T-cell (primary cell): ENCODE measurements at regions of chr12 and their contacts with region 1.

Region 1: DNA sequence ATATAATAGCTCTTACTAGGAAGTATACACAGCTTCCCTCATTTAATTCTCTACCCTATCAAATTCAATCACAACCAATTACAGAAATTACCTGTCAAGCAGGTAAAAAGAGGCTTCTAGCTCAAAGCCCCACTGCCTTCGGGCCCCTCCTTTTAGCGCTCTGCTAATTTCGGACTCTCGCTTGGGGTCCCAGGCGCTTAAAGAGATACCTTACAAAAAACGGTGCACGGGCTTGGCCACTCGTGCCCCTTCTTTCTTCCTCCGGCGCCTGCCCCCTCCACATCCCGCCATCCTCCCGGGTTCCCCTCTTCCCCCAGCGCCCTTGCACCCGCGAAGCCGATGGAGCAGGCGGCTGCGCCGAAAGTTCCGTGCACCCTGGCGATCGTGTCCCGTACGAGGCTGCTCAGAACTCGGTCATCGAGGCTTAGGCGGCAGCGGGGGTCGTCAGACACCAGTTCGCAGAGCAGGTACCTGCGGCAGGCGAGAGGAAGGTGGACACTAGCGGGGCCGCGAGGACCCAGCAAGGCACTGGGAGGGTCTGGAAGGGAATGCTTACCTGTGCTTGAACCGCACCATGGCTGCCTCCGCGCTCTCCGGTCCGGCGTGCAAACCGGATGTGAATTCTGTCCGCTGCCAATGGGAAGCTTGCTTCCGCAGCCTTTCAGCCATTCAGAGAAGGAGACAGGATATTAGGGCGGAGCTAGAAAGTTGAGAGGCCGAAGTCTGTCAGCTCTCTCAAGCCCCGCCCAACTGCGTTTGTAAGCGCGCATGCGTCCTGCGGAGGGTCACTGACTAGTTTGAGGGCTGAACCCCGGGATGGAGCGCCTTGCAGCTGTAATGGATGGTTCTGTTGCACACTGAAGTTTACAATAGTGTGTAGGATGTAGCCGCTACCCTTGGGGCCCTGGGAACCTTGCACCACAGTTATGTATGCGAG is at the start of gene POP5:
- DNase-seq: peak; percentile 76 to 96 (median 86)
- ATAC-seq: peak; percentile 92 to 95 (median 94)
- H3K4me3 ChIP-seq: peak within 1 kb of the TSS; percentile 88 to 95
- H3K4me3 Mint-ChIP-seq: peak within 1 kb of the TSS; percentile 97 to 98 (median 97)
- H3K27ac ChIP-seq: peak within 1 kb of the TSS; percentile 57
- H3K27ac Mint-ChIP-seq: peak within 1 kb of the TSS; percentile 91 to 93
- H3K4me1 ChIP-seq: peaks cover 4 to 32% of the 10 kb centered on the region in 2 experiments
- H3K4me1 Mint-ChIP-seq: peaks cover 38 to 40% (median 39%) of the 10 kb centered on the region in 3 donors
- H3K27me3 ChIP-seq: peaks cover 2 to 24% of the 10 kb centered on the region in 2 experiments
- H3K27me3 Mint-ChIP-seq: peaks cover 0 to 7% of the 10 kb centered on the region in 2 donors
- total RNA-seq, gene POP5: 40.6 to 69.0 (median 63.1) TPM

Region 2: DNA sequence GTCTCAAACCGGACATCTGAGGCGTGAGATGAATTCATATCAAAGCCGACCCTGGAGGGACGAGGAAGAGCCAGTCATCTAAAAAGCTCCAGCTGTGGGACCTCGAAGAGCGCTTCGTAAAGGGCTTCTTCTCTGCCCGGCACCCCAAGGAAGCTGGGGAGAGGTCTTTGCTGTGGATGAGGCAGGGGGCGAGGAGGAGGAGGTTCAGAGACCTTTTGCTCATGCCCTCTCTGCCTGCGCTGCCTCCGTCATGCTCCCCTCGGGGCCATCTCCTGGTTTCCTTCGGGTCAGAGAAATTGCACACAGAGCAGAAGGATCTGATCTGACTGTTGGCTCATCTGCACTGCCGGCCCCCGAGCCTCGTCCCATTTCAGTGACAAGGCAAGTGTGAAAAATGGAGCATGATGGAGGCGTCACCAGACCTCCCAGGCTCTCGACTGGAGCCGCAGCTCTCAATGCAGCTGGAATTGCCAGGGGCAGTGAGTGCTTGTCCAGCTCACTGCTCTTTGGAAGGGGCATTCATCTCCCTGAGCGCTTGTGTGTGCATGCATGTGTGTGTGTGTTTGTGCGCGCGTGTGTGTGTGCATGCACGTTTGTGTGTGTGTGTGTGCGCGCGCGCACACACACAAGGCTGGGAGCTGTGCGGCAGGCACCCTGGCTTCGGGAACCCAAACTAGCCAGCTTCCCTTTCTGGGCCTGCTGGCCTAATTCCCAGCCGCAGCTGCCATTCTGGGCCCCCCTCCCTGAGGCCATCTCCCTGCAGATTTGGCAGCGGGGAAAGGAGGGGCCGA is 68.6 kb after region 1 on chr12:
- CTCF ChIA-PET with region 1: interaction called, 8 to 12 read pairs
- POLR2A ChIA-PET with region 1: interaction called in 1 of 2 experiments, 3 read pairs
- DNase-seq: no peak
- ATAC-seq: peak in 1 of 4 experiments; percentile 8
- H3K4me3 ChIP-seq: peak overlapping the region in 1 of 2 donors; percentile 17
- H3K4me3 Mint-ChIP-seq: peak overlapping the region in 2 of 3 donors; percentile 37 to 46
- H3K27ac ChIP-seq: no peak overlapping the region
- H3K27ac Mint-ChIP-seq: peak overlapping the region in 1 of 2 donors; percentile 87
- H3K4me1 ChIP-seq: peaks cover 0 to 12% of the 10 kb centered on the region in 2 experiments
- H3K4me1 Mint-ChIP-seq: peaks cover 12 to 16% (median 15%) of the 10 kb centered on the region in 3 donors
- H3K27me3 ChIP-seq: peaks cover 5 to 69% of the 10 kb centered on the region in 2 experiments
- H3K27me3 Mint-ChIP-seq: peaks cover 46 to 60% of the 10 kb centered on the region in 2 donors

Region 3: DNA sequence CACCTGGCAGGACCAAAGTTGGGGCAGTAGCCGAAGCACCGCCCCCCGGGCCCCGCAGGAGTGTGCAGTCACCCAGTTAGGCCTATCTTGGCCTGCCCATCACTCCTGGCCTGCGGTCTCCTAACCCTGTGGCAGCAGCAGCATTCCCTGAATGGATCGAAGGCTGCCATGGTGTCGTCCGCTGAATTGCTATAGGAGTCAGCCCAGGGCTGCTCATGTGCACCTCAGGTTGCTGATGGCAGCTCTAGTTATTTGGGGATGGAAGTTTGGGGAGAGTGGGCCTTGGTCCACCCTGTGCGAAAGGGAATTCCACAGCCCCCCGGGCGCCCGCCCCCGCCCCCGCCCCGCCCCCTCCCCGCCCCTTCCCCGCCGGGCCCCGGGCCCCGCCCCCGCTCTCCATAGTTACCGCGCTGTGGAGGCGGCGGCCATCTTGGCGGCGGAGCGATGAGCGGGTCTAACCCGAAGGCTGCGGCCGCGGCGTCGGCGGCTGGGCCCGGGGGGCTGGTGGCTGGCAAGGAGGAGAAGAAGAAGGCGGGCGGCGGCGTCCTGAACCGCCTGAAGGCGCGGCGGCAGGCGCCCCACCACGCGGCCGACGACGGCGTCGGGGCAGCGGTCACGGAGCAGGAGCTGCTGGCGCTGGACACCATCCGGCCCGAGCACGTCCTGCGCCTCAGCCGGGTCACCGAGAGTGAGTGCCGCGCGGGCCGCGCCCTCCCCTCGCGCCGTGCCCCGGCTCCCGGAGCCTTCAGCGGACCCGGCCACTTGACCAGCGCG is 129.2 kb after region 1 on chr12 and contains the start of gene UNC119B:
- CTCF ChIA-PET with region 1: interaction called, 3 to 13 read pairs
- POLR2A ChIA-PET with region 1: no interaction called
- DNase-seq: peak; percentile 30 to 83 (median 64)
- ATAC-seq: peak; percentile 90 to 94 (median 92)
- H3K4me3 ChIP-seq: peak within 1 kb of the TSS; percentile 62 to 89
- H3K4me3 Mint-ChIP-seq: peak within 1 kb of the TSS; percentile 87 to 90 (median 88)
- H3K27ac ChIP-seq: peak within 1 kb of the TSS; percentile 46
- H3K27ac Mint-ChIP-seq: peak within 1 kb of the TSS; percentile 88 to 90
- H3K4me1 ChIP-seq: peaks cover 5 to 23% of the 10 kb centered on the region in 2 experiments
- H3K4me1 Mint-ChIP-seq: peaks cover 34 to 45% (median 39%) of the 10 kb centered on the region in 3 donors
- H3K27me3 ChIP-seq: no peaks in the 10 kb centered on the region
- H3K27me3 Mint-ChIP-seq: no peaks in the 10 kb centered on the region
- total RNA-seq, gene UNC119B: 14.3 to 26.1 (median 22.6) TPM